Right ventricle myocardium inferior (tissue), 1 donor: ENCODE measurements at regions of chr4 and their contacts with region 1.

Region 1: GRCh38 chr4:99061048-99061700 is 27.4 kb downstream of the ADH5 start:
- DNase-seq: no peak
- ATAC-seq: no peak

Region 2: GRCh38 chr4:98909646-98910401 is 151.3 kb before region 1 on chr4:
- intact Hi-C with region 1: no loop called
- DNase-seq: no peak
- ATAC-seq: no peak

Region 3: DNA sequence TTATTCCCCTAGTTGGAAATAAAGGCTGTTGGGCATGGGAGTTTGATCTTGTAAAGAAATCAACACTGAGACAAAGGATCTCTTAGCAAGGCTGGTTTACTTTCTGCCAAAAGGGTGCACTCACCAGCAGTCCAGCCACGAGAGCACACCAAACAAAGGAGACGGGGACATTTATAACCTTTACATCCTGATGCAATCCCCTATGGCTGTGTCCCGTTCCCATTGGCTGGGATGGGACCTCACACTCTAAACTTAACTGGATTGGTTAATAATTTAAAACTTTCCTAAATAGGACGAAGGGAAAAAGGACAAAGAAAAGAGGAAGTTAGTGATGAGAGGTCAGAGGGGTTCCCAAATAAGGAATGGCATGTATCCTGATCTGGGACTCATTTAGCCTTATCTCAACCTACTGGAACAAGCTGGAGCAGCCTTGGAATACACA is 47.8 kb before region 1 on chr4:
- intact Hi-C with region 1: loop called (anchors 5 kb)
- DNase-seq: no peak
- ATAC-seq: peak; percentile 91

Region 4: DNA sequence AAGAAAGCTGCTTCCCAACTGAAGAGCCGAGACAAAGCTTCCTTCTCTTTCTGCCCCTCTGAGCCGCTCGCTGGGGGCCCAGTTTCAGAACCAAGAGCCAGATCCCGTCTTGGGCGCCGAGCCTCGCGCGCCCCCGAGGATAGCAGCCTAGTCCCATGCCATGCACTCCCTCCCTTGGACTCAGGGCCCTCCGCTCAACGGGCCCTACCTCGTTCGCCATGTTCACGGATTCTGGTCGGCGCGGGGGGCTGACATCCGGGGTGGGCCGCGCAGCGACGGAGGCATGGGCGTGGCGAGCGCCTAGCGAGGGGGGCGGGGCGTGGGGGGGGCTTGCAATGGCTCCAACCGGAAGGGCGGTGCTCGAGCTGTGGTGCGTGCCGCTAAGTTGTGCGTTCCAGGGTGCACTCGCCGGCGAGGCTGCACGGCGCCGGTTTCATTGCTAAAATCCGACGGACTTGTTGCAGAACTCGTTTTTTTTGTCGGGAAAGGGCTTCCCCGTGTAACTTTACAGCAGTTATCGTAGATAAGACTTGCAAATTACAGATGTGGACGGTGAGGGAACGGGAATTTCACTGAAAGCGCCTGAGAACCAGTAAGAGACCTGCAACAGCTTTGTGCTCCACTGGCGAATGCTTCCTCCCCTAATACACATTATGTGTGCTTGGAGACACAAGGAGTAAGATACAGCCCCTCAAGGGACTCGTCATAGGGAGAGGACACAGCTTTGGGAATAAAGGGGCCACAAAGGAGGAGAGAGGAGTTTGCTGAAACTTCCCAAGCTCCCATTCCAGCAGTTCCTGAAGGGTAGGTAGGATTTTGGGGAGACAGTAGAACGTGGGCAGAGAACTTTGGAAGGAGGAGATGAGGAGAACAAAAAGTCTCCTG is 27.5 kb after region 1 on chr4 and contains the start of gene ADH5:
- intact Hi-C with region 1: loop called (anchors 2 kb)
- DNase-seq: peak; percentile 95
- ATAC-seq: peak; percentile 99
- total RNA-seq, gene ADH5: 193 TPM

Region 5: GRCh38 chr4:99593781-99594636 is 532.8 kb after region 1 on chr4:
- intact Hi-C with region 1: no loop called
- DNase-seq: no peak
- ATAC-seq: no peak